ENCODE measurements at regions of chr17 and their contacts with region 1.

Region 1: DNA sequence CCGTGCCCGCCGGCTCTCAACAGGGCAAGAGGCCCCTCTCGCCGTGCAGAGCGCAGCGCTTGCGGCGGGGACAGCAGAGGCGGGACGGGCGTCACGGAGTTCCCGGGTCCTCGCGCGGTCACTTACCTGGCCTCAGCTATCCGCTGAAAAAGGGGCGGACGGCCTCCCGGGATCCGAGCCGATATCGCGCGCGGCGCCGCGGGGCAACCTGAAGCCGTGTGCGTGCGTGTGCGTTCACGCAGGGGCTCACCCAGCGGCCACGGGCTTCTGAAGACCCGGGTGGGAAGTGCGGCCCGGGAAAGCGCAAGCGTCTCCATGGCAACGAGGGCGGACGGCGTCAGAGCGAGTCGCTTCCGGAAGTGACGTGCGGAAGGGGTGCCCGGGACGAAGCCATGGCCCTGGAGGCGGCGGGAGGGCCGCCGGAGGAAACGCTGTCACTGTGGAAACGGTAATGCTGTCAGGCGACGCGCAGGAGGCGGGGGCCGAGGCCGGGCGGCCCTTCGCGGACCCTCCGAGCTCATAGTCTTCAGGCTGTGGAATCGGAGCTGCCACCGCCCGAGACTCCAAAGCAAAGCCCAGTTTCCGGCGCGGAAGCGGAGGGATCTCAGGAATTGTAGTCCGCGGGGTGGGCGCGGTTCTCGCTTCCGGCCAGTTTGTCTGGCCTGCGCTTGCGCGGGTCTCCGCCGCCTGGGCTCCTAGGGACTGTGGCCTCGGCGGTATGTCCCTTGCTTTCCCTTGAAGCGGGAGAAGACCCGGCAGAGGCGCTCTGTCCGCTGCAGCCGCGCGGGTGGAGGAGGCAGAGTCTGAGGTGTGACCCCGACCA is at the start of gene ENDOV:
- DNase-seq: peak; percentile 92 to 95 (median 93)
- H3K4me3 ChIP-seq: peak within 1 kb of the TSS; percentile 81 to 97
- H3K4me3 Mint-ChIP-seq: peak within 1 kb of the TSS; percentile 82 to 90 (median 86)
- H3K27ac ChIP-seq: peak within 1 kb of the TSS; percentile 73
- H3K27ac Mint-ChIP-seq: peak within 1 kb of the TSS; percentile 90 to 96 (median 94)
- H3K4me1 ChIP-seq: peaks cover 26% of the 10 kb centered on the region
- H3K4me1 Mint-ChIP-seq: peaks cover 13 to 52% (median 25%) of the 10 kb centered on the region in 4 donors
- H3K27me3 ChIP-seq: peaks cover 7% of the 10 kb centered on the region
- H3K27me3 Mint-ChIP-seq: peaks cover 11 to 14% of the 10 kb centered on the region in 2 donors
- total RNA-seq, gene ENDOV: 20.1 to 25.5 TPM

Region 2: GRCh38 chr17:80454557-80455335 is 39.7 kb after region 1 on chr17:
- CTCF ChIA-PET with region 1: no interaction called
- POLR2A ChIA-PET with region 1: interaction called, 22 read pairs
- intact Hi-C with region 1: loop called (anchors 1 kb)
- DNase-seq: peak; percentile 92 to 96 (median 95)
- H3K4me3 ChIP-seq: peak overlapping the region; percentile 42 to 66
- H3K4me3 Mint-ChIP-seq: peak overlapping the region; percentile 89 to 93 (median 92)
- H3K27ac ChIP-seq: peak overlapping the region; percentile 93
- H3K27ac Mint-ChIP-seq: peak overlapping the region; percentile 92 to 98 (median 96)
- H3K4me1 ChIP-seq: peaks cover 18% of the 10 kb centered on the region
- H3K4me1 Mint-ChIP-seq: peaks cover 9 to 25% (median 12%) of the 10 kb centered on the region in 4 donors
- H3K27me3 ChIP-seq: no peaks in the 10 kb centered on the region
- H3K27me3 Mint-ChIP-seq: peaks cover 14 to 17% of the 10 kb centered on the region in 2 donors

Region 3: GRCh38 chr17:81034779-81035388 is 619.9 kb after region 1 on chr17 and contains the start of gene BAIAP2:
- CTCF ChIA-PET with region 1: no interaction called
- POLR2A ChIA-PET with region 1: no interaction called
- intact Hi-C with region 1: loop called (anchors 1 kb)
- DNase-seq: peak; percentile 93
- H3K4me3 ChIP-seq: peak within 1 kb of the TSS in 1 of 2 donors; percentile 49
- H3K4me3 Mint-ChIP-seq: peak within 1 kb of the TSS; percentile 88 to 95 (median 92)
- H3K27ac ChIP-seq: no peak within 1 kb of the TSS
- H3K27ac Mint-ChIP-seq: peak within 1 kb of the TSS; percentile 86 to 93 (median 89)
- H3K4me1 ChIP-seq: peaks cover 20% of the 10 kb centered on the region
- H3K4me1 Mint-ChIP-seq: peaks cover 8 to 30% (median 14%) of the 10 kb centered on the region in 4 donors
- H3K27me3 ChIP-seq: no peaks in the 10 kb centered on the region
- H3K27me3 Mint-ChIP-seq: peaks cover 0 to 13% of the 10 kb centered on the region in 2 donors
- total RNA-seq, gene BAIAP2: 5.4 to 7.2 TPM

Measured in CD4-positive, alpha-beta memory T cell (primary cell).